B cell (primary cell): ENCODE measurements at regions of chr16 and their contacts with region 1.

Region 1: DNA sequence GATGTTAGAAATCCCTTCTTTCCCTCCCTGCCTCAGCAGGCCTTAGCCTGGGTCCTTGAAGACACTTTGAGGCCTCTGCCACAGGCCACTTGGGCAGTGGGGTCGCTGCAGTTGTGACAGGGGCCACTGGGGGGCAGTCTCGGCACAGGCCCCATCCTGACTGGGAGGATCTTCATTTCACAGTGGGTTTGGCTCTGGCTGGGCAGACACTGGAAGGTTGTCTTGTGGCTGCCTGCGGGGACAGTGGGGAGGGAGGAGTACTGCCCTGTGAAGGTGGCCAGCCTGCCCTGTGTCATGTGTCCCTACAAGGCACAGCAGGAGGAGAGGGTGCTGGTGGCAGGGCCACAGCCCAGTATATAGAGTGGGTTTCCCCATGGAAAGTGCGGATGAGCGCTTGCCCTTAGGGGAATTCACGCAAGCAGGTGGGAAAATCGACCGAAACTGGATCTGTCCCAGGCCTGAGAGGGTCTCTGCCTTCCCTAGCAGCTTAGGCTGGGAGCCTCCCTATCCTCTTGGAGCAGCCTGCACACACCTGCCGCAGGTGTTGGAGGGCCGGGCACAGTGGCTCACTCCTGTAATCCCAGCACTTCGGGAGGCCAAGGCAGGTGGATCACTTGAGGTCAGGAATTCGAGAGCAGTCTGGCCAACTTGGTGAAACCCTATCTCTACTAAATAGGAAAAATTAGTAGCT is 28.8 kb downstream of the GINS2 start:
- DNase-seq: peak; percentile 73
- ATAC-seq: peak; percentile 94
- H3K4me3 ChIP-seq: no peak overlapping the region
- H3K4me3 Mint-ChIP-seq: no peak overlapping the region
- H3K27ac ChIP-seq: no peak overlapping the region
- H3K27ac Mint-ChIP-seq: peak overlapping the region; percentile 76
- H3K4me1 ChIP-seq: no peaks in the 10 kb centered on the region
- H3K4me1 Mint-ChIP-seq: peaks cover 4% of the 10 kb centered on the region
- H3K27me3 ChIP-seq: no peaks in the 10 kb centered on the region
- H3K27me3 Mint-ChIP-seq: no peaks in the 10 kb centered on the region
- CTCF ChIP-seq: peak; percentile 90

Region 2: DNA sequence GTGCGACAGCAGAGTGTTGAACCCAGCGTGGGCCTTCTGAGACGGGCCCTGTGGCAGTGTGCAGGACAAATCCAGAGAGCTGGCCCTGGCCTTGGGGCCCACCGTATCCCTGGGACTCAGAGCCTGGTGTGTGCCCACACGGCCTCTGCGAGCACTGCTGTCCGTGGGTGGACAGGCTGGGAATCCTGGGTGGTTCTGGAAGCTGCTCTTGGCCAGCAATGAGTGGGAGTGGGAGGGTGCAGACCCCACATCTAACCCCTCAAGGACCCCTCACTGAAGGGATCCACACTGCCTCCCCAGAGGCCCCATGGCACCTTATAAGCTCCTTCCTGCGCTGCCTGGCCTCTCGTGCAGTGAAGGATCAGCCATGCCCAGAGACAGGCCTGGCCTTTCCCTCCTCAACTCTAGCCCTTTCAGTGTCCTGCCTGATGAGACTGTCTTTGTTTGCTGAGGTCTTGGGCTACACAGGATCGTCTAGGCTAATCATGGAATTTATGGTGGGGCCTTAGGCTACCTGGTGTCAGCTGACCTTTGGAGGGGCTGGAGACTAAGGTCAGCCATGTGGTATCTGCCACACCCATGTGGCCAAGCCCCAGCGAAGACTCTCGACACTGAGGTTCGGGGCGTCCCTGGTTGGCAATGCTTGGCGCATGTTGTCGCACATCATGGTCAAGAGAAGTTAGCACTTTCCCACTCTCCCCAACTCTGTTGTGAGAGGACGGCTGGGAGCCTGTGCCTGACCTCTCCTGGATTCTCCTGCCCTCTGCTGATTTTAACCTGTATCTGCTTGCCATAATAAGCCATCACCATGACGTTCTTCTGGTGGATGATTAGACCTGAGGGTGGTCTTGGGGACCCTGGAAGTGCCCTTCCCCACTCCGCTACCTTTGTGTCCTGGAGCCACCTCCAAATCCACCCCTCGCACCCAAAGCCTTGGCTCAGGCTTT is 45.2 kb after region 1 on chr16:
- CTCF ChIA-PET with region 1: interaction called, 3 read pairs
- POLR2A ChIA-PET with region 1: interaction called, 11 read pairs
- intact Hi-C with region 1: no loop called
- DNase-seq: no peak
- ATAC-seq: no peak
- H3K4me3 ChIP-seq: no peak overlapping the region
- H3K4me3 Mint-ChIP-seq: no peak overlapping the region
- H3K27ac ChIP-seq: no peak overlapping the region
- H3K27ac Mint-ChIP-seq: no peak overlapping the region
- H3K4me1 ChIP-seq: no peaks in the 10 kb centered on the region
- H3K4me1 Mint-ChIP-seq: no peaks in the 10 kb centered on the region
- H3K27me3 ChIP-seq: no peaks in the 10 kb centered on the region
- H3K27me3 Mint-ChIP-seq: no peaks in the 10 kb centered on the region
- CTCF ChIP-seq: no peak

Region 3: DNA sequence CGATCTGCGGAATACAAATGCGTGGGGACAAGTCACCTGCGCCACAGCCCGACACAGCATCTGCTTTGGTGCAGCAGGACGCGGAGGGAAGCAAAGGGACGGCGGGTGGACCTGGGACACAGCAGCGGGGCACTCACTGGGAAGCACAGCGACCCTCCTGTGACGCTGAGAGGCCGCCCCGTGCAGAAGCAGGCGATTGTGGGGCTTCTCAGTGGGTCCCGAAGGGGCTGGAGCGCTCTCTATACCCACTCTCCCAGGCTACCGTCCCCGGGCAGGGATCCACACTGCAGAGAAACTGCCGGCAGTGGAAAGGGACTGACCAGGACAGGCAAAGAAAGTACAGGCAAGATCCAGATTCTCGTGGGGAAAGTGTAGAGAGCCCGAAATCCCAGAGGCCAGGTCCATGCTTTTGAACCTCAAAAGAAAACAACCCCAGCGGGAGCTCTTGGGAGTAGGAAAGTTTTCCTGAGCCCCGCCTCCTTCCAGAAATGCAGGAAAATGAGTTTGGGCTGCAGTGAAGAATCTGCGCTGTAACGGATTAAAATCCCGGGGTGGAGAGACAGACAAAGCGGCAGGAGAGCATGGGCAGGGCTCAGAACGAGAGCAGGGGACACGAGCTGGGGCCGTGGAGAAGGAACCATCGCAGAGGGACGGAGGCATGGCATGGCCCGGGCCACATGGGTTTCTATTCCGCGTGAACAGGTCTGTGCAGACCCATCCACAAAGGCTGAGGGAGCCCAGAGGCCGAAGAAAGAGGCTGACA is 152.3 kb after region 1 on chr16:
- CTCF ChIA-PET with region 1: interaction called, 17 read pairs
- POLR2A ChIA-PET with region 1: no interaction called
- intact Hi-C with region 1: no loop called
- DNase-seq: no peak
- ATAC-seq: no peak
- H3K4me3 ChIP-seq: no peak overlapping the region
- H3K4me3 Mint-ChIP-seq: no peak overlapping the region
- H3K27ac ChIP-seq: no peak overlapping the region
- H3K27ac Mint-ChIP-seq: no peak overlapping the region
- H3K4me1 ChIP-seq: no peaks in the 10 kb centered on the region
- H3K4me1 Mint-ChIP-seq: no peaks in the 10 kb centered on the region
- H3K27me3 ChIP-seq: peaks cover 0 to 20% (median 3%) of the 10 kb centered on the region in 4 experiments
- H3K27me3 Mint-ChIP-seq: peaks cover 26% of the 10 kb centered on the region
- CTCF ChIP-seq: no peak